Caco-2 (cell line): ENCODE measurements at regions of chr12 and their contacts with region 1.

Region 1: GRCh38 chr12:32874078-32874477 is 22.5 kb downstream of the PKP2 start:
- DNase-seq: no peak
- H3K4me3 ChIP-seq: no peak overlapping the region
- H3K4me3 Mint-ChIP-seq: no peak overlapping the region
- H3K27ac Mint-ChIP-seq: no peak overlapping the region
- H3K4me1 ChIP-seq: peaks cover 65% of the 10 kb centered on the region
- H3K4me1 Mint-ChIP-seq: peaks cover 39% of the 10 kb centered on the region
- H3K27me3 ChIP-seq: no peaks in the 10 kb centered on the region
- H3K27me3 Mint-ChIP-seq: no peaks in the 10 kb centered on the region
- CTCF ChIP-seq: no peak

Region 2: DNA sequence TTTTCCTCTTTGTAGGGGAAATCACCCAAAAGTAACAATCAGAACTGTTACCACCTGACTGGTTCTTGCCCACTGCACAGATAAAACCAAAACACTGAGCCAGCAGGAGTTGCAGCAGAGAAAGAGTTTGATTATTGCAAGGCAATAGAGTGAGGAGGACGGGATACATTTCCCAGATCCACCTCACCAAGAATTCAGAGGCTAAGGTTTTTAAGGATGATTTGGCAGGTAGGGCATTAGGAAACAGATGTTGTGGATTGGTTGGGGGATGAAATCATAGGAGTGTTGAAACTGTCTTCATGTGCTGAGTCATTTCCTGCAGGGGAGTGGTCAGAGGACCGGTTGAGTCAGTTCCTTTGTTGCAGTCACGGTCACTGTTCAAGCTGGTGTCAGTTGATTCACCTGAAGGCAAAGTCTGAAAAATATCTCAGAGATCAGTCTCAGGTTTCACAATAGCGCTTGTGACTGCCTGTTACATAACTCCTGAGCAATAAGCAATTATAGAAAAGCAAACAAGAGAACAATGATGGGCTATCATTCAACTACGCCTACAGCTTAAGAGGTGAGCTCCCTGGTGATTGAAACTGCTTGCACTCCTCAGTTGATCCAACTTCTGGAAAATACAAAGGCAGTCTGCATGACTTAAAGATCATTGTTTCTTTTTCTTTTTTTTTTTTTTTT is 1124.9 kb before region 1 on chr12:
- CTCF ChIA-PET with region 1: no interaction called
- POLR2A ChIA-PET with region 1: no interaction called
- intact Hi-C with region 1: no loop called
- DNase-seq: peak; percentile 92 to 95
- H3K4me3 ChIP-seq: no peak overlapping the region
- H3K4me3 Mint-ChIP-seq: peak overlapping the region; percentile 31
- H3K27ac Mint-ChIP-seq: peak overlapping the region; percentile 96
- H3K4me1 ChIP-seq: peaks cover 18% of the 10 kb centered on the region
- H3K4me1 Mint-ChIP-seq: peaks cover 22% of the 10 kb centered on the region
- H3K27me3 ChIP-seq: no peaks in the 10 kb centered on the region
- H3K27me3 Mint-ChIP-seq: no peaks in the 10 kb centered on the region
- CTCF ChIP-seq: no peak

Region 3: DNA sequence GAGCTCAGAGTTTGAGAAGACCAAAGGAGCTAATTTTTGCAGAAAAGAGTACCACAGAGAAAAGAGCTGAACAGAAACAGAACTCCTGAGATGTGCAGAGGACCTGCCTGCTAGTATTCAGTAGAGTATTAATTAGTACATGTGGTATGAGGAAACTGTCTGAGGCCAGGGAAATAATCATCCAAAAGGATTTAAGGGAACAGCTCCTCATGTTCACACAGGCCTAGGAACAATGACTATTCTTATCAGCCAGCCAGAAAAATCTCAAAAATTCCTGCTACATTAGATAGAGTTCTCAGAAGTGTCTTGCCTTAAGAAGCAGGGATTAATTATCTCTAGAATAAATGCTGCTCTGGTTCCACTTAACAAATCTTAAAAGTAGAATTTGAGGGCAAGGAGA is 13.9 kb before region 1 on chr12:
- CTCF ChIA-PET with region 1: no interaction called
- POLR2A ChIA-PET with region 1: interaction called, 3 read pairs
- intact Hi-C with region 1: loop called (anchors 2 kb)
- DNase-seq: peak in 1 of 2 experiments; percentile 37
- H3K4me3 ChIP-seq: no peak overlapping the region
- H3K4me3 Mint-ChIP-seq: peak overlapping the region; percentile 28
- H3K27ac Mint-ChIP-seq: peak overlapping the region; percentile 51
- H3K4me1 ChIP-seq: peaks cover 42% of the 10 kb centered on the region
- H3K4me1 Mint-ChIP-seq: peaks cover 48% of the 10 kb centered on the region
- H3K27me3 ChIP-seq: no peaks in the 10 kb centered on the region
- H3K27me3 Mint-ChIP-seq: no peaks in the 10 kb centered on the region
- CTCF ChIP-seq: no peak

Region 4: GRCh38 chr12:32906407-32907165 is 32.5 kb after region 1 on chr12:
- CTCF ChIA-PET with region 1: no interaction called
- POLR2A ChIA-PET with region 1: no interaction called
- intact Hi-C with region 1: no loop called
- DNase-seq: no peak
- H3K4me3 ChIP-seq: no peak overlapping the region
- H3K4me3 Mint-ChIP-seq: no peak overlapping the region
- H3K27ac Mint-ChIP-seq: no peak overlapping the region
- H3K4me1 ChIP-seq: peaks cover 68% of the 10 kb centered on the region
- H3K4me1 Mint-ChIP-seq: peaks cover 56% of the 10 kb centered on the region
- H3K27me3 ChIP-seq: no peaks in the 10 kb centered on the region
- H3K27me3 Mint-ChIP-seq: no peaks in the 10 kb centered on the region
- CTCF ChIP-seq: no peak

Region 5: GRCh38 chr12:33012226-33012807 is 138.2 kb after region 1 on chr12:
- CTCF ChIA-PET with region 1: no interaction called
- POLR2A ChIA-PET with region 1: no interaction called
- intact Hi-C with region 1: no loop called
- DNase-seq: peak; percentile 73 to 85
- H3K4me3 ChIP-seq: no peak overlapping the region
- H3K4me3 Mint-ChIP-seq: peak overlapping the region; percentile 48
- H3K27ac Mint-ChIP-seq: peak overlapping the region; percentile 53
- H3K4me1 ChIP-seq: peaks cover 27% of the 10 kb centered on the region
- H3K4me1 Mint-ChIP-seq: peaks cover 17% of the 10 kb centered on the region
- H3K27me3 ChIP-seq: no peaks in the 10 kb centered on the region
- H3K27me3 Mint-ChIP-seq: no peaks in the 10 kb centered on the region
- CTCF ChIP-seq: no peak